ENCODE measurements at regions of chr18 and their contacts with region 1.

Region 1: DNA sequence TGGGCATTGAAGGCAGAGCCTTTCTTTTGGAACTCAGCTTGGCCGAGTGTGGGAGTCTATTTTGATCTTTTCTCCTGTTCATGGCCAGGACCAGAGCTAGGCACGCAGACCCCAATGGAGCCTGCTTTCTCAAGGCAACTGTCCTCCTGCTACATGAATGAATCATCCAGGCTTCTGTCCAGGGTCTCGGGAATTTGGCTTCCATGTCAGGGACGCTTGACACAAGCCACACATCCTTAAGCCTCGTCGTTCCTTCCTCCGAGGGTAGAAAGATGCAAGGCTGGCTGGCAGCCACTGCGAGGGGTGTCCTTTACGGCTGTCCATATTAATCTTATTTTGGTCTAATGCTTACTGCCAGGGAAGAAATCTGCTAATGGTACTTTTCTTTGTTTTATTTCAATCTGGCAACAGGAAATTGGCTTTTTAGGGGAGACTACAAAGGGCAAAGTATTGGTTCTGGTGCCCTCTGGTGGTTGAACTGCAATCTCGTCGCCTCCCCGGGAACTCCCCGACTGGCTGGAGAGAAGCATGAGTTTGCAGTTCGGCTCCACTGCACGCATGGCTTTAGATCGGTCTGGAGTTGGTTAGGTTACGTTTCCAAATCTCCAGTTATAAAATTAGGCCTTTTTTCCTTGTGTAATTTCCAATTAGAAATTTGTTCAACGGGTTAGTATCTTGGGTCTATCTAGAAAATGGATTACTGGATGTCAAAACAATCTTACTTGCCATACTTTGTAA is 135.2 kb downstream of the ALPK2 start:
- DNase-seq: peak; percentile 56
- H3K4me3 ChIP-seq: peak overlapping the region; percentile 39
- H3K27ac ChIP-seq: peak overlapping the region; percentile 73
- H3K4me1 ChIP-seq: peaks cover 30% of the 10 kb centered on the region
- H3K27me3 ChIP-seq: peaks cover 6% of the 10 kb centered on the region
- CTCF ChIP-seq: peak; percentile 92

Region 2: GRCh38 chr18:58338961-58339592 is 154.6 kb before region 1 on chr18:
- intact Hi-C with region 1: no loop called
- DNase-seq: no peak
- H3K4me3 ChIP-seq: no peak overlapping the region
- H3K27ac ChIP-seq: no peak overlapping the region
- H3K4me1 ChIP-seq: peaks cover 36% of the 10 kb centered on the region
- H3K27me3 ChIP-seq: no peaks in the 10 kb centered on the region
- CTCF ChIP-seq: no peak

Region 3: DNA sequence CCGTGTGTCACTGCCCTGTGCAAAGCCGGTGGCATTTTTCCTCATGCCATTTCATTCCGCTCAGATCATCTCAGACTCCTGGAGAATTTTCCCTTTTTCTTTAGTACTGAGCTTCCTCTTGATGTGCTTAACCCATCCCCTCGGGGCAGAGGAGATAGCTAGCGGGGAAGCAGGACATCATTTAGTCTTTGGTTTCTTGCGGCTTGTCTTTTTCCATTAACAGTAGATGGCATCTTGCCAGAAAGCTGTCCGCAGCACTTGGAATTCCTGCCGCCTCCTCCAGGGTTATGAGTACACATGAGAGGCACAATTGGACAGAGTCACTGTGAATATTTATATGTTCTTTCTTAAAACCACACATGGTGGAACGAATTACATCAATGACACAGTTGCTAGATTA is 91.4 kb before region 1 on chr18:
- intact Hi-C with region 1: loop called (anchors 10 kb)
- DNase-seq: no peak
- H3K4me3 ChIP-seq: no peak overlapping the region
- H3K27ac ChIP-seq: no peak overlapping the region
- H3K4me1 ChIP-seq: peaks cover 20% of the 10 kb centered on the region
- H3K27me3 ChIP-seq: no peaks in the 10 kb centered on the region
- CTCF ChIP-seq: no peak

Measured in left ventricle myocardium inferior (tissue), 1 donor.